ENCODE measurements at regions of chr14 and their contacts with region 1.

Region 1: GRCh38 chr14:67971627-67972553 is 152.3 kb downstream of the RAD51B start:
- DNase-seq: peak; percentile 84
- ATAC-seq: peak; percentile 98
- H3K4me3 ChIP-seq: no peak overlapping the region
- H3K27ac ChIP-seq: peak overlapping the region; percentile 36
- H3K4me1 ChIP-seq: peaks cover 24% of the 10 kb centered on the region
- H3K27me3 ChIP-seq: no peaks in the 10 kb centered on the region
- CTCF ChIP-seq: no peak

Region 2: GRCh38 chr14:68008491-68008890 is 36.6 kb after region 1 on chr14:
- CTCF ChIA-PET with region 1: no interaction called
- POLR2A ChIA-PET with region 1: no interaction called
- intact Hi-C with region 1: loop called (anchors 5 kb)
- DNase-seq: no peak
- ATAC-seq: no peak
- H3K4me3 ChIP-seq: no peak overlapping the region
- H3K27ac ChIP-seq: no peak overlapping the region
- H3K4me1 ChIP-seq: peaks cover 12% of the 10 kb centered on the region
- H3K27me3 ChIP-seq: no peaks in the 10 kb centered on the region
- CTCF ChIP-seq: no peak

Region 3: GRCh38 chr14:68060198-68060597 is 88.3 kb after region 1 on chr14:
- CTCF ChIA-PET with region 1: interaction called, 10 read pairs
- POLR2A ChIA-PET with region 1: no interaction called
- intact Hi-C with region 1: no loop called
- DNase-seq: no peak
- ATAC-seq: no peak
- H3K4me3 ChIP-seq: no peak overlapping the region
- H3K27ac ChIP-seq: no peak overlapping the region
- H3K4me1 ChIP-seq: no peaks in the 10 kb centered on the region
- H3K27me3 ChIP-seq: no peaks in the 10 kb centered on the region
- CTCF ChIP-seq: no peak

Region 4: GRCh38 chr14:68084256-68084655 is 112.4 kb after region 1 on chr14:
- CTCF ChIA-PET with region 1: no interaction called
- POLR2A ChIA-PET with region 1: no interaction called
- intact Hi-C with region 1: no loop called
- DNase-seq: peak; percentile 37
- ATAC-seq: peak; percentile 48
- H3K4me3 ChIP-seq: no peak overlapping the region
- H3K27ac ChIP-seq: no peak overlapping the region
- H3K4me1 ChIP-seq: no peaks in the 10 kb centered on the region
- H3K27me3 ChIP-seq: no peaks in the 10 kb centered on the region
- CTCF ChIP-seq: peak; percentile 71

Measured in PC-3 (cell line).